ENCODE measurements at regions of chr15 and their contacts with region 1.

Region 1: DNA sequence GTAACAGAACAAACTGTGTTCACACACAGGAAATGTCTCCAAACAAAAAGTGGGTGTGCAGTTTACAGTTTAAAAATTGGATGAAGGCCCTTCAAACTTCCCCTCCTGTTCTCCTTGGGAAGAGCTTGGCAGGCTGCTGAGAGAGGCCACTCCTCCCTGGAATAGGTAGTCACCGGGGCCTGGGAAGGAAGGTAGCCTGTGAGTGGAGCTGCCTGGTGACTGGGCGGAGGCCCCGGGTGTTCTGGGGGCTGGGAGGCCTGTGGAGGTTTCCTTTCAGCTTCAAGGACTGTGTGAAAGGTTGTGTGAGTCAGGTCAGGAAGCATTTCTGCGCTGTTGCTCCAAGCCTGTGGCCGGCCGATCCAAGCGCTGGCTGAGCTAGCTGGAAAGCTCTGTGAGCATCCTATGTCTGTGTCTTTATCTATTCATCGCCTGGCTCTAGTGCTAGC is 14.1 kb downstream of the SLCO3A1 start:
- DNase-seq: peak; percentile 78 to 87 (median 81)
- H3K4me3 ChIP-seq: no peak overlapping the region
- H3K27ac ChIP-seq: peak overlapping the region in 1 of 2 donors; percentile 66
- H3K4me1 ChIP-seq: peaks cover 17% of the 10 kb centered on the region
- H3K27me3 ChIP-seq: no peaks in the 10 kb centered on the region
- CTCF ChIP-seq: no peak
- EP300 ChIP-seq: no peak
- POLR2A ChIP-seq: no peak

Region 2: DNA sequence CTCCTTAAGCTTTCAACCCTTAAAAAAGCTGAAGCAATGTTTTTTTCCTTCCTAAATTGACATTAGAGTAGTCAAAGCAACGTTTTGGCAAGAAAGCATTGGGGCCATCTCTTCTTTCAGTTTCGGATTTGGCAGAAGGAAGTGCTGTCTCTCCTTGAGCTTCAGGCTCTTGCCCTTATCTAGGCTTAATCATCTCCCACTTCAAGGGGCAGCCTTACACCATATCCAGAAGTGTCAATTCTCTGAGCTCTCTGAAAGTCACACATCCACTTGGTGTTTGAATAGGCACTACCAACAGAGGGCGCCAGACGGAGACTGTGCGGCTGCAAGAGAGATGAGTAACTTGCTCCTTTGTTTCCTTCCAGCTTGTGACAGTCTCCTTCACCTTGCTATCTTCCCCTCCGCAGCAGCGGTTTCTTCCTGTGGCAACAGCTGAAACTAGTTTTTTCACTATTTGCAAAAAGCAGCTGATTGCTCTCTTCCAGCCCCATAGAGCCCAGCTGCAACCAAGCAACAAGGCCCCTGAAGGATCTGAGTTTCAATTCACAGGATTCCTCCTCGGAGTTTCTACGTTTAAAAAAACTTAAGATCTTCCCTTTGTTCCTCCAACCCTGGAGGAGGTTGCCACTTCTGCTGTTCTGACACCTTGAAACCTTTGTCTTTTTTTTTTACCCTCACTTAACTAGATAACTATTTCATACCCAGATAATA is 161.1 kb before region 1 on chr15:
- intact Hi-C with region 1: no loop called
- DNase-seq: peak; percentile 47 to 76 (median 70)
- H3K4me3 ChIP-seq: no peak overlapping the region
- H3K27ac ChIP-seq: no peak overlapping the region
- H3K4me1 ChIP-seq: no peaks in the 10 kb centered on the region
- H3K27me3 ChIP-seq: no peaks in the 10 kb centered on the region
- CTCF ChIP-seq: peak; percentile 22 to 42 (median 31)
- EP300 ChIP-seq: no peak
- POLR2A ChIP-seq: no peak

Region 3: GRCh38 chr15:91807122-91807521 is 60.5 kb before region 1 on chr15:
- intact Hi-C with region 1: no loop called
- DNase-seq: no peak
- H3K4me3 ChIP-seq: no peak overlapping the region
- H3K27ac ChIP-seq: no peak overlapping the region
- H3K4me1 ChIP-seq: no peaks in the 10 kb centered on the region
- H3K27me3 ChIP-seq: no peaks in the 10 kb centered on the region
- CTCF ChIP-seq: no peak
- EP300 ChIP-seq: no peak
- POLR2A ChIP-seq: no peak

Region 4: DNA sequence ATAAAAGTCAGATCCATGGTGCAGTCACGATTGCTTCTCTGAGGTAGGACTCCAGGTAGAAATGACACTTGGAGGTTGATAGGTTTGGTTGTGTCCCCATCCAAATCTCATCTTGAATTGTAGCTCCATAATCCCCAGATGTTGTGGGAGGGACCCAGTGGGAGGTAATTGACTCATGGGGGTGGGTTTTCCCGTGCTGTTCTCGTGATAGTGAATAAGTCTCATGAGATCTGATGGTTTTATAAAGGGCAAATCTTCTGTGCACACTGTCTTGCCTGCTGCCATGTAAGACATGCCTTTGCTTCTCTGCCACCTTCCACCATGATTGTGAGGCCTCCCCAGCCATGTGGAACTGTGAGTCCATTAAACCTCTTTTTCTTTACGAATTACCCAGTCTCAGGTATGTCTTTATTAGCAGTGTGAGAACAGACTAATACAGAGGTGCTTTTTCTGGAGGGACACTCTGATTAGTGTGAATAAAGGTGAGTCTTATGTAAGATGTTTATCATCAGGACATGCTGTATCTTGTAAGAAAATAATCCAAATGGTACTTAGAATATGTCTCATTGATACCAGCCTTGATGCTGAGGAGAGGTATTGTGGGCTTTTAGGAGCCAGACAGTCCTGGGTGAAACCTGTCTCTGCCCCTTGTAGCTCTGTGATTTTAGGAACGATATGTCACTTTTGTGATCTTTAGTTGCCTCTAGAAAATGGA is 28.9 kb after region 1 on chr15:
- intact Hi-C with region 1: loop called in 1 of 4 experiments (anchors 1 kb)
- DNase-seq: no peak
- H3K4me3 ChIP-seq: no peak overlapping the region
- H3K27ac ChIP-seq: no peak overlapping the region
- H3K4me1 ChIP-seq: peaks cover 2% of the 10 kb centered on the region
- H3K27me3 ChIP-seq: no peaks in the 10 kb centered on the region
- CTCF ChIP-seq: no peak
- EP300 ChIP-seq: no peak
- POLR2A ChIP-seq: no peak